ENCODE measurements at regions of chr7 and their contacts with region 1.

Region 1: DNA sequence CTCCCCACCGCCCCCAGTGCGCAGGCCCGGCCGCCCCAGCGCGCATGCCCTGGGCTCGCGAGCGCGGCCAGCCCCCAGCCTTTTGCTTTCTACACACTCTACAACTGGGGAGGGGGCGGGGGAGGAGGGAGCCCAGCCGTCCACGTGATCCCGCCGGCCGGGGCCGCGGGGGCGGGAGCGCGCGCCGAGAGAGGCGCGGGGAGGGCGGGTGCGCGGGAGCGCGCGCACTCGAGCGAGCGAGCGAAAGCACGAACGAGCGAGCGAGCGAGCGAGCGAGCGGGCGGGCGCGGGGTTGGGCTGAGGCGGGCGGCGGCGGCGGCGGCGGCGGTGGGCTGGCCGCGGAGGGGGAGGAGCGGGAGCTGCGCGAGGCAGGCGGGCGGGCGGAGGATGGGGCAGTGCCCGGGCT is at the start of gene AUTS2:
- DNase-seq: peak; percentile 82 to 92 (median 90)
- H3K4me3 ChIP-seq: peak within 1 kb of the TSS; percentile 65 to 97 (median 87)
- H3K27ac ChIP-seq: peak within 1 kb of the TSS; percentile 77 to 99 (median 95)
- H3K27me3 ChIP-seq: no peaks in the 10 kb centered on the region
- CTCF ChIP-seq: peak in 1 of 56 donors; percentile 6
- total RNA-seq, gene AUTS2: 47.2 to 133 (median 80.3) TPM

Region 2: GRCh38 chr7:69403169-69403568 is 194.9 kb before region 1 on chr7:
- intact Hi-C with region 1: loop called in 1 of 2 experiments (anchors 10 kb)
- DNase-seq: peak in 1 of 10 donors; percentile 37
- H3K4me3 ChIP-seq: no peak overlapping the region
- H3K27ac ChIP-seq: no peak overlapping the region
- H3K27me3 ChIP-seq: no peaks in the 10 kb centered on the region
- CTCF ChIP-seq: peak in 44 of 56 donors; percentile 17 to 68 (median 40)

Region 3: GRCh38 chr7:69610374-69611084 is 12.4 kb after region 1 on chr7:
- intact Hi-C with region 1: no loop called
- DNase-seq: no peak
- H3K4me3 ChIP-seq: no peak overlapping the region
- H3K27ac ChIP-seq: no peak overlapping the region
- H3K27me3 ChIP-seq: no peaks in the 10 kb centered on the region
- CTCF ChIP-seq: no peak

Region 4: DNA sequence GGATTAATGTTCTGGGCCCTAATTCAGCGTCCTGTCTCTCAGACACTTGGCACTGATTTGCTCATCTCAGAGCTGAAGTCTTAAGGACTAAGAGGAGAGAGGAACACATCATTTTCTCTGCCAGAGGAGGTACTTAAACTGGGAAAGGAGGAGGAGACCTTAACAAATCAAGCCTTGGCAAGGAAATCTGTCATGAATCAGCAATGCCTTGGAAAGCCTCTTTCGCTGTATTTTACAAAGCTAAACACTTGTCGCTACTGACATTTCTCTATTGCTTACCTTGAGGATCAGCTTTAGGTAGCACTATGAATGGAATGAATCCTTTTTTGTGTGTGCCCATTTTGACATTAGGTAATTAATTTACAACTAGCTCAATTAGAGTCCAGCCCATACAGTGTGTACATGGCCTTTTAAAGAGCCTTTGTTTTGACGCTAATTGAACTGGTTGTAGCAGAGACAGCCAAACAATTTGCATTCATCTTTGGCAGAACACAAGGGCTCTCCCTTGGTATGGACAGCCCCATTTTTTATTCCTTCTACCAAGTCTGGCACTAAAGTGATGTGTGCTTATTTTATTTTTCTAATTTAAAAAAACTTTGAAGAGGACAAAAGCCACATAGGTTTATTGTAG is 37.6 kb after region 1 on chr7:
- intact Hi-C with region 1: loop called in 1 of 2 experiments (anchors 2 kb)
- DNase-seq: no peak
- H3K4me3 ChIP-seq: peak overlapping the region in 15 of 59 donors; percentile 5 to 34 (median 17)
- H3K27ac ChIP-seq: peak overlapping the region in 4 of 59 donors; percentile 3 to 19 (median 10)
- H3K27me3 ChIP-seq: no peaks in the 10 kb centered on the region
- CTCF ChIP-seq: no peak

Region 5: GRCh38 chr7:69814421-69814962 is 216.4 kb after region 1 on chr7:
- intact Hi-C with region 1: loop called (anchors 2 to 5 kb)
- DNase-seq: peak; percentile 11 to 91 (median 82)
- H3K4me3 ChIP-seq: peak overlapping the region in 36 of 59 donors; percentile 2 to 56 (median 26)
- H3K27ac ChIP-seq: peak overlapping the region in 57 of 59 donors; percentile 14 to 94 (median 83)
- H3K27me3 ChIP-seq: no peaks in the 10 kb centered on the region
- CTCF ChIP-seq: peak in 19 of 56 donors; percentile 1 to 41 (median 24)

Region 6: GRCh38 chr7:70693686-70694360 is 1095.7 kb after region 1 on chr7:
- intact Hi-C with region 1: loop called in 1 of 2 experiments (anchors 10 kb)
- DNase-seq: peak; percentile 21 to 72 (median 52)
- H3K4me3 ChIP-seq: peak overlapping the region; percentile 49 to 83 (median 72)
- H3K27ac ChIP-seq: peak overlapping the region in 46 of 59 donors; percentile 3 to 87 (median 53)
- H3K27me3 ChIP-seq: no peaks in the 10 kb centered on the region
- CTCF ChIP-seq: peak in 25 of 56 donors; percentile 8 to 41 (median 24)

Measured in dorsolateral prefrontal cortex (tissue), 120 donors.